ENCODE measurements at regions of chr22 and their contacts with region 1.

Region 1: GRCh38 chr22:40346178-40347118 is at the start of gene ADSL:
- DNase-seq: no peak
- H3K4me3 ChIP-seq: peak within 1 kb of the TSS; percentile 99
- CTCF ChIP-seq: peak; percentile 39

Region 2: DNA sequence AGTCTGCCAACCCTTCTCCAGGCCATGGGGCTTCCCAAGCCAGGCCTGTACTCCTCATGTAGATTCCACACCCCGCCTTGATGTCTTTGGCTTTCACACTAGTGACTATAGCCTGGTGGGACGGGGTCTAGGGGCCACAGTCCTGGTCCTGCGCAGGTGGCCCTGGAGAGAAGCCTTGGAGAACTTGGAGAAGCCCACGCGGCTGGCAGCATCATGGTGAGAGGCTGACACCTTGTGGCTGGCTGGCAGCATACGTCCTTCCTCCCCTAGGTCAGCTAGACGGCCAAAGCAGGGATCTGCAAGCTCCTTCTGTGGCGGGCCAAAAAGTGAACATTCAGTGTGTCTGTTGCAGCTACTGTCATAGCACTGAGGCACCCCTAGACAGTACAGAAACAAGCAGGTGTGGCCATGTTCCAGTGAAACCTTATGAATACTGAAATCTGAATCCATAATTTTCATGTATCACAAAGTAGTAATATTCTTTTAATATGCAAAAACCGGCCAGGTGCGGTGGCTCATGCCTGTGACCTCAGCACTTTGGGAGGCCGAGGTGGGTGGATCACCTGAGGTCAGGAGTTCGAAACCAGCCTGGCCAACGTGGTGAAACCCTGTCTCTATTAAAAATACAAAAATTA is 309.7 kb before region 1 on chr22:
- CTCF ChIA-PET with region 1: interaction called, 32 read pairs
- POLR2A ChIA-PET with region 1: no interaction called
- DNase-seq: no peak
- H3K4me3 ChIP-seq: no peak overlapping the region
- CTCF ChIP-seq: peak; percentile 90

Region 3: DNA sequence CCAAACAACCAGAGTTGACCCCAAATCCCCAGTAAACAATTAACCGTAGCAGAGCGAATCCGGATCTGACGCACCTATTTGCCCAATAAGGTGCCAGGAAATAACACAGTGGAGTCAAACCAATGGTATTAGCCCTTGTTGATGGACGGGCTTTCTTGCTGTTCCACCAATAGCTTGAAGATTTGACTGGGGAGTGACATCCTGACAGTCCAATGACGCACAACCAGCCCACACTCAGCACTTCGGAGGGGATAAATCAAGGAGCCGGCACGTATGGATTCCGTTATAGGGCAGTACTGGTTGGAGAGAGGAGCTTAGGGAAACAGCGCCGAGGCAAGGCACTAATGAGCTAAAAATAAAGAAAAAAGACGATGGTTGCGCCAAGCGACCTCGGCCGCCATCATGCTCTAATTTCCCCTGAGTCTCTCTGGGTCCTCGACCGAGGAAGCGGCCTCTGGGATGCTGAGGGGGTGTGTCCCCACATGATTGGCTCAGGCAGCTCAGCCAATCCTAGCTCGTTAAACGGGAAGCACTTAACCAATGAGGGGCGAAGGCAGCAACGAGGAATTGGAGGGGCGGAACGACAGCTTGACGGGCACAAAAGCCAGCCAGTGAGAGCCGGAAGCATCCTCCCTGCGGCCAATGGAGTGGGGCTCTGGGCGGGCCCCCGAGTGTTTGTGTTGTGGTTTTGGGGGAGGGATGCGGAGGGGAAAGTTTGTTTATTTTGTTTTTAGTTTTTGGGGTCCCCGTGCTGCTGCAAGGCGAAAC is 302.2 kb before region 1 on chr22:
- CTCF ChIA-PET with region 1: interaction called, 14 read pairs
- POLR2A ChIA-PET with region 1: interaction called, 8 read pairs
- DNase-seq: peak; percentile 96
- H3K4me3 ChIP-seq: peak overlapping the region; percentile 95
- CTCF ChIP-seq: no peak

Region 4: GRCh38 chr22:40193429-40194421 is 152.7 kb before region 1 on chr22:
- CTCF ChIA-PET with region 1: interaction called, 15 read pairs
- POLR2A ChIA-PET with region 1: no interaction called
- DNase-seq: no peak
- H3K4me3 ChIP-seq: no peak overlapping the region
- CTCF ChIP-seq: peak; percentile 10

Region 5: GRCh38 chr22:40334899-40335298 is 11.5 kb before region 1 on chr22:
- CTCF ChIA-PET with region 1: interaction called, 10 read pairs
- POLR2A ChIA-PET with region 1: interaction called, 3 read pairs
- DNase-seq: no peak
- H3K4me3 ChIP-seq: no peak overlapping the region
- CTCF ChIP-seq: no peak

Region 6: DNA sequence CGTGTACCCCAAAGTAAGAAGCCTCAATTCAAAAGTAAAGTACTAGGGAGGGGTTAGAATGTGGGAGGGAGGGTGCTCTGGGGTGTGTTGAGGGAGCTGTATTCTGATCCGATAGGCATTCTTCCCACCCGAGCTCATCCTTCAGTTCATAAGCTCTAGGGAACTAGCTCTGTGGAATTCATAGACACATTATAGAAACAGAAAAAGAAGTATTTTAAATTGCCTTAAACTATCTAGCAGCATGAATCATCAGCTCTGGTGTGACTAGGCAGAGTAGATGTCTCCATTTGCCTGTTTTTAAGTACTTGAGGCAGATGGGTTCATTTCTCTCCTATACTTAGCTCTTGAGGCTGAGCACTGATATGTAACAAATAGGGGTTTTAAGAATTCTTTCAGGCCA is 16.6 kb after region 1 on chr22:
- CTCF ChIA-PET with region 1: interaction called, 45 read pairs
- POLR2A ChIA-PET with region 1: interaction called, 5 read pairs
- DNase-seq: peak; percentile 80
- H3K4me3 ChIP-seq: no peak overlapping the region
- CTCF ChIP-seq: no peak

Measured in AG04449 (cell line).